ENCODE measurements at regions of chr1 and their contacts with region 1.

Region 1: GRCh38 chr1:108643492-108644335 is 17.2 kb downstream of the HENMT1 start:
- DNase-seq: peak; percentile 60
- H3K4me3 Mint-ChIP-seq: peak overlapping the region; percentile 8
- H3K27ac Mint-ChIP-seq: peak overlapping the region; percentile 98
- H3K4me1 Mint-ChIP-seq: peaks cover 76% of the 10 kb centered on the region
- H3K27me3 Mint-ChIP-seq: no peaks in the 10 kb centered on the region

Region 2: GRCh38 chr1:108199781-108200570 is 443.7 kb before region 1 on chr1 and contains the start of gene SLC25A24:
- CTCF ChIA-PET with region 1: interaction called, 8 read pairs
- POLR2A ChIA-PET with region 1: interaction called, 13 read pairs
- DNase-seq: peak; percentile 86
- H3K4me3 Mint-ChIP-seq: peak within 1 kb of the TSS; percentile 84
- H3K27ac Mint-ChIP-seq: peak within 1 kb of the TSS; percentile 78
- H3K4me1 Mint-ChIP-seq: peaks cover 38% of the 10 kb centered on the region
- H3K27me3 Mint-ChIP-seq: peaks cover 7% of the 10 kb centered on the region
- total RNA-seq, gene SLC25A24: 32.5 to 33.2 TPM

Region 3: DNA sequence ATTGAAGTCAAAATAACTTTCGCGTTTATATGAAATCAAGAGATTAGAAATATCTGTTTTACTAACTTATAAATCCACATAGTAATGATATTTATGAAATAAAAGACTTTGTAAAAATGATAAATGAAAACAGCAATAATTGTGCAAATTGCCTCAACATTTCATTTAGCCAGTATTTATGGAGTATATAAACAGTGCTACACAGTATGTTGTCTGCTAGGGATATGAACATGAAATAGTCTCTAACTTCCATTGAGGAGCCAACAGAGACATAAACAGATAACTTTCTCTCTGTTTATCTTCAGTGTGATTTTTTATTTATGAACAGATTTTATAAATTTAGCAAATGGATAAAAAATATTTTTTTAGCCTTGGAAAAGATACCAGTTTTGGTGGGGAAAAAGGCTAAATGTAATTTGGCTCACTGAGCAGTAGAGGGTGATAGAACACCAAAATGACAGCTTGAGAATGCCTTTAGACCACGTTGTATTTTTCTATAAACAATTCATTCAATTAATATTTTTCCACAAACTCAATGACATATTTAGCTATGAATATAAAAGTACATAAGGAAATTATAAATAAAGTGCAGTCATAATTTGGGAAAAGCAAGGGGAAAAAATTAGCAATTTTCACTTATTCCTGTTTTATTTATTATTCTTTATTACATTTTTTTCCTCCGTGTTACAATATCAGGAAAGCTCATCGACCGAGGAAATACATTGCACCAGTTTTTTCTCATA is 131.3 kb before region 1 on chr1:
- CTCF ChIA-PET with region 1: interaction called, 50 read pairs
- POLR2A ChIA-PET with region 1: interaction called, 5 read pairs
- DNase-seq: no peak
- H3K4me3 Mint-ChIP-seq: no peak overlapping the region
- H3K27ac Mint-ChIP-seq: no peak overlapping the region
- H3K4me1 Mint-ChIP-seq: no peaks in the 10 kb centered on the region
- H3K27me3 Mint-ChIP-seq: peaks cover 49% of the 10 kb centered on the region

Region 4: GRCh38 chr1:108590957-108591356 is 52.8 kb before region 1 on chr1:
- CTCF ChIA-PET with region 1: interaction called, 3 read pairs
- POLR2A ChIA-PET with region 1: interaction called, 13 read pairs
- DNase-seq: no peak
- H3K4me3 Mint-ChIP-seq: no peak overlapping the region
- H3K27ac Mint-ChIP-seq: no peak overlapping the region
- H3K4me1 Mint-ChIP-seq: peaks cover 39% of the 10 kb centered on the region
- H3K27me3 Mint-ChIP-seq: no peaks in the 10 kb centered on the region

Region 5: DNA sequence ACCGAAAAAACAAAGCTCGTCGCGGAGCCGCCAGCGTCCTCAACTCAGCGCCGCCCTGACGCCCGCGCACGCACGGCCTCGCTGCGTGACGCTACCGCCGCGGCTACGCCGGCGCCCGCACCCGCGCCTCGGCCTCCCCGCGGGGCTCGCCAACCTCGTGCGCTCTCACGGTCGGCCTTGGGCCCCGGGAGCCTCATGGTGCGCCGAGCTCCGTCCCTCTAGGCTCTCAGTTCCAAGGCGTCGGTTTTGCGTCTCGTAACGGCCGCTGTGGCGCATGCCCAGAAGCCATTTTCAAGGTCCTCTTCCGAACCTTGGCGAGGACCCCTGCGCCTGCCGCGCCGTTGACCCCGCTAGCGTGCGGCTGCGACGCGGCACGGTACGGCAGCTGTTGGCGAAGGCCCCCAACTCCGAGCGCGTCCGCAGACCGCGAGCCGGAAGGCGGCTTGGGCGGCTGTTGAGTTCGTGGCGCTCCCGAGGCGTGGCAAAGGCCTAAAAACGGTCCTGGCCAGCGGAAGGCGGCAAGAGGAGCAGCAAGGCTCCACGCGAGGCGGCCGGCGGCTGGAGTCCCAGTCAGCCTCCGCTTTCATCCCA is 17.4 kb after region 1 on chr1 and contains the start of gene HENMT1:
- CTCF ChIA-PET with region 1: interaction called, 100 read pairs
- POLR2A ChIA-PET with region 1: interaction called, 229 read pairs
- DNase-seq: peak; percentile 82
- H3K4me3 Mint-ChIP-seq: peak within 1 kb of the TSS; percentile 78
- H3K27ac Mint-ChIP-seq: peak within 1 kb of the TSS; percentile 90
- H3K4me1 Mint-ChIP-seq: peaks cover 45% of the 10 kb centered on the region
- H3K27me3 Mint-ChIP-seq: no peaks in the 10 kb centered on the region
- total RNA-seq, gene HENMT1: 26.7 to 27.3 TPM

Region 6: GRCh38 chr1:108708691-108709660 is 65.3 kb after region 1 on chr1:
- CTCF ChIA-PET with region 1: interaction called, 8 read pairs
- POLR2A ChIA-PET with region 1: interaction called, 35 read pairs
- DNase-seq: peak; percentile 70
- H3K4me3 Mint-ChIP-seq: no peak overlapping the region
- H3K27ac Mint-ChIP-seq: no peak overlapping the region
- H3K4me1 Mint-ChIP-seq: peaks cover 33% of the 10 kb centered on the region
- H3K27me3 Mint-ChIP-seq: no peaks in the 10 kb centered on the region

Region 7: GRCh38 chr1:108791790-108792189 is 148.1 kb after region 1 on chr1:
- CTCF ChIA-PET with region 1: no interaction called
- POLR2A ChIA-PET with region 1: no interaction called
- DNase-seq: no peak
- H3K4me3 Mint-ChIP-seq: no peak overlapping the region
- H3K27ac Mint-ChIP-seq: no peak overlapping the region
- H3K4me1 Mint-ChIP-seq: no peaks in the 10 kb centered on the region
- H3K27me3 Mint-ChIP-seq: no peaks in the 10 kb centered on the region